HepG2 (cell line): ENCODE measurements at regions of chr9 and their contacts with region 1.

Region 1: DNA sequence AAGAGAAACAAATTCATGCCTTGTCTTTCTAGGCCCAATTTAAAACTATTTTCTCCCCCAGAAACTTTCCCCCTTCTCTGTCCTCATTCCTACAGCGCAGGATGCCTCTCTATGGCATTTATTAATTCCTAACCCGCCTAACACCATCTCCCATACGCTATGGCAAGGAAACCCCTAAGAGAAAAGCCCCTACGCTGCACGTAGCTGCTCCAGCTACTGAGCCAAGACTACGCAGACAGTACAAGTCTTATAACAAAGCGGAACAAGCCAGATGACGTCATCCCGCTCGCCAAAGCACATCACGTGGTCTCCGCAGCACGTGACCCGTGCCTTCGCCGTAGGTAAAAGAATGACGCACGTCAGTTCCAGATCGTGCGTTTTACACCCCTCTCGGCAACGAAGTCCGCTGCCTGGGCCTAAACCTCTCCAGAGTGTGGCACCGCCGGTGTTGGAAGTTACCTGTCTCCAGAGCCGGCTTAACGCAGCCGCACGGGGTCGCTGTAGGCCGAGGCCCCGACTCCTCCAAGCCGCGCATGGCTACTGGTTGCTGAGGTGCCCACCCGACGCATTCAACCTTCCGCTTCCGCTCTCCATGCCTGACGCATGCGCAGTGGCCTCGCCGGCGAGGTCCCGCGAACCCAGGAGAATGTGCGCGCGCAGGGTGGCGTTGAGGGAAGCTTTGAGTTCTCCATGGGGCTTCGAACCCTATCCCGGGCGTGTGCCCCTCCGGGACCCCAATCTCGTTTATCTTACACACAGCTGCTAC is at the start of gene TRMO:
- DNase-seq: peak; percentile 93
- ATAC-seq: peak; percentile 90
- H3K4me3 ChIP-seq: peak within 1 kb of the TSS; percentile 67 to 79 (median 69)
- H3K27ac ChIP-seq: peak within 1 kb of the TSS; percentile 96
- H3K4me1 ChIP-seq: peaks cover 30% of the 10 kb centered on the region
- H3K27me3 ChIP-seq: peaks cover 0 to 6% of the 10 kb centered on the region in 2 experiments; a peak in 2 of 5 replicates
- CTCF ChIP-seq: peak; percentile 96
- EP300 ChIP-seq: peak in 1 of 2 experiments; percentile 39; a peak in 1 of 4 replicates
- POLR2A ChIP-seq: peak; percentile 87 to 98
- RAD21 ChIP-seq: peak; percentile 73
- total RNA-seq, gene TRMO: 18.6 and 21.5 TPM in 2 replicates

Region 2: DNA sequence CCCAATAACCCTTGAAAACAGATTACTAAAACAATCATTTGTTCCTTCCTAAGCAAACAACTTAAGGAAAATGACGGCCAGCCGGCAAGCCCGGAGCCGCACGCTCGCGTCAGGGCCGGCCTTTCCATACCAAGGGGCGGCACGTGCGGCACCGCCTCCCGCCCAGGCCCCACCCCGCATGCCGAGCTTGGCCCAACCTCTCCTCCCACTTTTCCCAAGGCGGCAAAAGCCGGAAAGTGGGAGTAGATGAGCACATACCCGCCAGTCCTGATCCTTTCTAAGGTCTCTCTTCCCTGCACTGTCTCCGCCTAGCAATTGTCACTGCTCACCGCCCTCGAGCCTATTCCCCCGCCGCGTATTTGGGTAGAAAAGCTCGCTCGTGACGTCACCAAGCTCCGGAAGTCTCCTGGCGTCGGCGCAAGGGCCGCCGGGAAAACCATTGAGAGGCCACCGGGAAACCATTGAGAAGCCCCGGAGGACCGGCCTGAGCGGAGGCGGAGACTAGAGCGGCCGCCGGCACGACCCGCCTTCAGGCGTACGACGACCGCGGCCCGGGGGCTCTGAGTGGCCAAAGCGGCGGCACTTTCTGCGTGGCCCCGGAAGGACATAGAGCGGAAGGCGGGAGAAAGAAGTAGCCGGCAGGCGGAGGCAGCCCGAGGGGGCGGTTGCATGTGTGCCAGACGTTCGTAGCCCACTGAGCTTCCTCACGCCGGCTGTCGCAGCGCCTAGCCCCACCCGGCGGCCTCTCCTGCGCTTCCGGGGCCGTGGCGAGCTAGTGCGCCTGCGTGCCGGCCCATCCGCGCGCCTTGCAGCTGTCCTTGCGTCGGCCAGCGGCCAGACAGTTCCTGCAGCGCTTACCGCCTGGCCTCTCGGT is 288.9 kb before region 1 on chr9 and contains the starts of genes NCBP1 and TSTD2:
- CTCF ChIA-PET with region 1: no interaction called
- POLR2A ChIA-PET with region 1: interaction called, 16 read pairs
- in situ Hi-C with region 1: no loop called
- intact Hi-C with region 1: no loop called
- DNase-seq: peak; percentile 95
- ATAC-seq: peak; percentile 96
- H3K4me3 ChIP-seq: peak within 1 kb of the TSS; percentile 89 to 96 (median 89)
- H3K27ac ChIP-seq: peak within 1 kb of the TSS; percentile 98
- H3K4me1 ChIP-seq: peaks cover 51% of the 10 kb centered on the region
- H3K27me3 ChIP-seq: peaks cover 0 to 8% of the 10 kb centered on the region in 2 experiments; a peak in 1 of 5 replicates
- CTCF ChIP-seq: peak; percentile 21; the same call in 1 of the 2 replicates
- EP300 ChIP-seq: 0 out of 4 replicates have a peak, but pooled peaks of 1 of the 2 experiments have one; percentile 11
- POLR2A ChIP-seq: peak; percentile 77 to 93
- RAD21 ChIP-seq: 0 out of 2 replicates have a peak, but pooled peaks have one; percentile 8
- total RNA-seq, gene NCBP1: 40.2 and 46.5 TPM in 2 replicates
- total RNA-seq, gene TSTD2: 16.0 and 17.0 TPM in 2 replicates

Region 3: DNA sequence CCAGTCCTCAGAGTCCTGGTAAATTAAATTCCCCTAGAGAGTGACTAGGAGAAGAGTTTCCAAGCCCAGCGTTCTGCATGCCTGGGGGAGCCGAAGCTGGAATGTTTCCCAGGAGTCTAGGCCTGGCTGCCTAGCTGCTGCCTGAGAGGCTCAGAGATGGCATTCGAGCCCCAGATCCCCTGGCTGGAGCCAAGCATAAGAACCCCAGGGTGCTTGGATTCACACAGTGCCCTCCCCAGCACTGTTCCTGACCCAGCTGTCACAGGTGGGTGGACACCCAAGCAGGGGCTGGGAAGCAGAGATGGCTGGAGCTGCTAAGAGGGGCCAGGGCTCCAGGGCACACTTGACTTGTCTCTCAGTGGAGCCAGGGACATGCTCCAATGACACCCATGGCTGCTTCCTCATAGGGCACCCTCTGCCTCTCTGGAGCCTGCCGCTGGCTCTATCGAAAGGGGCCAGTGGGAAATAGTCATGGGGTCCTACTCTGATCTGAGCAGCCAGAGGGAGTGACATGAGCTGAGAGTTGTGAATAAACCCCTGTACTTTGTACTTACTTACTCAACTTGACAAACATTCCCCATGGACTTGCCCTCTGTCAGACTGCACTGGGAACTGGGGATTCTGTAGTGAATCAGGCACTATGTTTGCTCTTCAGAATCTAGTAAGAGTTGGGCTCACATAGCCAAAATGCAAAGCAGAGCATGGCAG is 162.4 kb before region 1 on chr9:
- CTCF ChIA-PET with region 1: no interaction called
- POLR2A ChIA-PET with region 1: interaction called, 16 read pairs
- in situ Hi-C with region 1: no loop called
- intact Hi-C with region 1: no loop called
- DNase-seq: peak; percentile 96
- ATAC-seq: peak; percentile 95
- H3K4me3 ChIP-seq: peak overlapping the region; percentile 25 to 64 (median 37); a peak in 3 of 6 replicates
- H3K27ac ChIP-seq: peak overlapping the region; percentile 81
- H3K4me1 ChIP-seq: peaks cover 40% of the 10 kb centered on the region
- H3K27me3 ChIP-seq: no peaks in the 10 kb centered on the region
- CTCF ChIP-seq: peak; percentile 29
- EP300 ChIP-seq: peak in 1 of 2 experiments; percentile 83; a peak in 2 of 4 replicates
- POLR2A ChIP-seq: peak; percentile 53 to 57; a peak in 2 of 4 replicates
- RAD21 ChIP-seq: peak; percentile 36; the same call in 1 of the 2 replicates

Region 4: GRCh38 chr9:97982683-97983588 is 60.8 kb after region 1 on chr9 and contains the start of gene ANP32B:
- CTCF ChIA-PET with region 1: no interaction called
- POLR2A ChIA-PET with region 1: interaction called, 28 read pairs
- in situ Hi-C with region 1: loop called (anchors 10 kb)
- intact Hi-C with region 1: loop called (anchors 2 kb)
- DNase-seq: peak; percentile 67
- ATAC-seq: peak; percentile 90
- H3K4me3 ChIP-seq: peak within 1 kb of the TSS; percentile 84 to 93 (median 90)
- H3K27ac ChIP-seq: peak within 1 kb of the TSS; percentile 95
- H3K4me1 ChIP-seq: peaks cover 52% of the 10 kb centered on the region
- H3K27me3 ChIP-seq: no peaks in the 10 kb centered on the region; a peak in 2 of 5 replicates
- CTCF ChIP-seq: peak; percentile 76
- EP300 ChIP-seq: peak in 1 of 2 experiments; percentile 22; a peak in 1 of 4 replicates
- POLR2A ChIP-seq: peak; percentile 17 to 55; a peak in 3 of 4 replicates
- RAD21 ChIP-seq: peak; percentile 58
- total RNA-seq, gene ANP32B: 22.1 and 67.0 TPM in 2 replicates

Region 5: GRCh38 chr9:98056269-98057137 is 134.4 kb after region 1 on chr9 and contains the start of gene NANS:
- CTCF ChIA-PET with region 1: no interaction called
- POLR2A ChIA-PET with region 1: interaction called, 16 read pairs
- in situ Hi-C with region 1: no loop called
- intact Hi-C with region 1: no loop called
- DNase-seq: peak; percentile 95
- ATAC-seq: peak; percentile 98
- H3K4me3 ChIP-seq: peak within 1 kb of the TSS; percentile 87 to 97 (median 93)
- H3K27ac ChIP-seq: peak within 1 kb of the TSS; percentile 93
- H3K4me1 ChIP-seq: peaks cover 38% of the 10 kb centered on the region
- H3K27me3 ChIP-seq: no peaks in the 10 kb centered on the region
- CTCF ChIP-seq: peak; percentile 58
- EP300 ChIP-seq: no peak
- POLR2A ChIP-seq: peak; percentile 93 to 97
- RAD21 ChIP-seq: peak; percentile 12; the same call in 1 of the 2 replicates
- total RNA-seq, gene NANS: 203 and 266 TPM in 2 replicates